Cardiac septum (tissue), 1 donor: ENCODE measurements at regions of chr12 and their contacts with region 1.

Region 1: GRCh38 chr12:113048716-113049127 is 7.8 kb upstream of the DTX1 start:
- DNase-seq: no peak

Region 2: DNA sequence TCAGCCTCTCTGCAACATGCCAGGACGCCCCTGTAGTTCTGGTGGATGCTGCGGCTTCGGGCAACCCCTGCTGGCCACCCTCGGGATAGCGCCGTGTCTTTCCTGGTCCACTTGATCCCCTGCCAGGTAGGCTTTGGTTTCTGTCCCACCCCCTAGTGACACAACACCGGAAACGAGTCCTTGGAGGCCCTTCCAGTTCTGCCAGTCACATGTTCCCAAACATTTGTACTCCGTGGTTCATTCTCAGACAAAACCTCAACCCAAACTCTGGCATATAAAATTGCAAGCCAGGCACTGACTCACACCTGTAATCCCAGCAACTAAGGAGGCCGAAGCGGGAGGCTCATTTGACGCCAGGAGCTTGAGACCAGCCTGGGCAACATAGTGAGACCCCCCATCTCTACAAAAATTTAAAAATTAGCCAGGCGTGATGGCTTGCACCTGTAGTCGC is 49.7 kb after region 1 on chr12:
- intact Hi-C with region 1: loop called (anchors 2 kb)
- DNase-seq: no peak

Region 3: GRCh38 chr12:113152835-113153814 is 104.4 kb after region 1 on chr12:
- intact Hi-C with region 1: loop called (anchors 2 kb)
- DNase-seq: no peak

Region 4: DNA sequence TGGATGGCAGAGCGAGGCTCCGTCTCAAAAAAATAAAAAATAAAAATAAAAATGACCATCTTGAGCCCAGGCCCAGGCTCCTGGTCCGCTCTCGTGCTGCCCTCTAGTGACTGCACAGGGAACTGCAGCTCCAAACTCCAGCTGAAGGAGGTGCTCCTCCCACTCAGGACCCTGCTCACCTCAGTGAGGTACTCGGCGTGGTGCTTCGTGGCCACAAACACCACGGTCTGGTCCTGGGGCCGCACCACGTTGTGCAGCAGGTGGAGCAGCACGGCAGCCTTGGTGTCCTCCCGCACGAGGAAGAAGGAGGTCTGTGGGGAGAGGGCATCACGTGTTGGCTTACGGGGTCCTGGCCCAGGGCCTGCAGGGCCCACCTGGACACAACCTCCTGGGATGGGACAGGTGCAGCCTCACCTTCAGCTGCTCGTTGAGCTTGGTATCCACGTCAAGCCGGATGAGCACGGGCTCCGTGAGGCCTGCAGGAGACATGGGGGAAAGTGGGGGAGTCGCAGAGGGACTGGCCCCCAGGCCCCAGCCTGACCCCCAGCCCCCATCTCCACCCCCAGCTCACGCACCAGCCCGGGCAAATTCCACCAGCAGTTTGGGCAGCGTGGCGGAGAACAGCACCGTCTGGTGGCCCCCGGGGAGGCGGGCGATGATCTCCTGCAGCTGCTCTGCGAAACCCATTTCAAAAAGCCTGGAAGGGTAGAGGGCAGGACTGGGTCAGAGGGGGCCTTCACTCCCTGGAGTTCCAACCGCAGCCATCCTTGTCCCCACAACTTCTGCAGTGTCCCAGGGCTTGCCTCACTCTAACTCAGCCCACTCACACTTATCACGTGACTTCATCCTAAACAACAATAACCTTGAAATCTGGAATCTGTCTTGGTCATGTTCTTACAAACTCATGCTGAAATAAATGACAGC is 126.0 kb after region 1 on chr12:
- intact Hi-C with region 1: loop called (anchors 2 kb)
- DNase-seq: no peak